HepG2 (cell line): ENCODE measurements at regions of chr22 and their contacts with region 1.

Region 1: GRCh38 chr22:43993027-43993760 is 30.9 kb upstream of the PARVB start:
- DNase-seq: peak; percentile 34
- ATAC-seq: peak; percentile 91
- H3K4me3 ChIP-seq: no peak overlapping the region
- H3K27ac ChIP-seq: no peak overlapping the region
- H3K4me1 ChIP-seq: peaks cover 7% of the 10 kb centered on the region
- H3K27me3 ChIP-seq: no peaks in the 10 kb centered on the region
- CTCF ChIP-seq: peak; percentile 85
- EP300 ChIP-seq: no peak
- POLR2A ChIP-seq: no peak
- RAD21 ChIP-seq: peak; percentile 59

Region 2: GRCh38 chr22:43978558-43978957 is 14.6 kb before region 1 on chr22:
- CTCF ChIA-PET with region 1: no interaction called
- POLR2A ChIA-PET with region 1: no interaction called
- in situ Hi-C with region 1: no loop called
- intact Hi-C with region 1: no loop called
- DNase-seq: no peak
- ATAC-seq: no peak
- H3K4me3 ChIP-seq: no peak overlapping the region
- H3K27ac ChIP-seq: no peak overlapping the region
- H3K4me1 ChIP-seq: no peaks in the 10 kb centered on the region
- H3K27me3 ChIP-seq: no peaks in the 10 kb centered on the region
- CTCF ChIP-seq: no peak
- EP300 ChIP-seq: no peak
- POLR2A ChIP-seq: no peak
- RAD21 ChIP-seq: no peak

Region 3: DNA sequence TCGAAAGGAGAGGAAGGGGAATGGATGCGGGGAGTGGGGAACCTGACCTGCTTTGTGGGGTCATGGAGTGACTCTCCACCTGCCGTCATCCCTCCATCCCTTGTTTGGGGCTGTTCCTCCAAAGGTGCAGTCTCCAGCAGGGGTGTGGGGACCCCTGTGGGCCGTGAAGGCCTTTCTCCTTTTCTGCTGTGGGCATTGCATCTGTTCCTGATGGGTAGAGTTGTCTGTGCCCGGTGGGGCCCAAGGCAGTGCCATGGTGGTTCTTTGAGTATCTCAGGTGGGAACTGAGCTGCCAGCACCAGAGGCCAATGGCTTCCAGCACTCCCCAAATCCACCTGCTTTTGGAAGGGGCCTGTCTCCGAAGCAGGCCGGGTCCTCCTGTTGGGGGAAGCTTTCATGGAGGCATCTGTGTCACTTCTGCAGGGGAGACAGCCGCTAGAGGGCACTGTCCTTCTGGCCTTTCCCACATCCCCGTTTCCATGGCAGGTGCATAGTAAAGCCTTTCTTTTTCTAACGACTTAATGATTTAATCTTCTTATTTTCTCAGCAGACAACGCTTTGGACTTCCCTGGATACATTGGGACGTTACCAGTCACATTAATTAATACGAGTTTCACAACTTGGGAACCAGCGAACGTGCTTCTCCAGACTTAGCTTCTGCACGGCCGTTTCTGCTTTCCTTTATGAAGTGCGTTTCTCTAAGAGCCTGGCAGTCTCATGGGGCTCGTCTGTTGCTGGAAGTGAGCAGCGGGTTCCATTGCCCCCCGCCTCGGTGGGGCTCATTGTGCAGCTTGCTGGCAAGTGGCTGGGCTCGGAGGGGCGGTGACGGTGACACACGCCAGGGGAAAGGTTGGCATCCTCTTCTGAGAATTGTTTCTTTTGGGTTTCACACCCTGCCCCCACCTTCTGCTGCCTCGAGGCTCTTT is 88.0 kb after region 1 on chr22:
- CTCF ChIA-PET with region 1: interaction called, 17 read pairs
- POLR2A ChIA-PET with region 1: no interaction called
- in situ Hi-C with region 1: loop called (anchors 5 kb)
- intact Hi-C with region 1: loop called (anchors 1 kb)
- DNase-seq: peak; percentile 39
- ATAC-seq: peak; percentile 66
- H3K4me3 ChIP-seq: no peak overlapping the region
- H3K27ac ChIP-seq: no peak overlapping the region
- H3K4me1 ChIP-seq: no peaks in the 10 kb centered on the region
- H3K27me3 ChIP-seq: peaks cover 1 to 20% of the 10 kb centered on the region in 2 experiments; a peak in 2 of 5 replicates
- CTCF ChIP-seq: peak; percentile 75
- EP300 ChIP-seq: no peak
- POLR2A ChIP-seq: no peak
- RAD21 ChIP-seq: no peak